Head of caudate nucleus (tissue), 42 donors: ENCODE measurements at regions of chr5 and their contacts with region 1.

Region 1: GRCh38 chr5:126348855-126349635 is 74.2 kb upstream of the GRAMD2B start:
- DNase-seq: no peak

Region 2: DNA sequence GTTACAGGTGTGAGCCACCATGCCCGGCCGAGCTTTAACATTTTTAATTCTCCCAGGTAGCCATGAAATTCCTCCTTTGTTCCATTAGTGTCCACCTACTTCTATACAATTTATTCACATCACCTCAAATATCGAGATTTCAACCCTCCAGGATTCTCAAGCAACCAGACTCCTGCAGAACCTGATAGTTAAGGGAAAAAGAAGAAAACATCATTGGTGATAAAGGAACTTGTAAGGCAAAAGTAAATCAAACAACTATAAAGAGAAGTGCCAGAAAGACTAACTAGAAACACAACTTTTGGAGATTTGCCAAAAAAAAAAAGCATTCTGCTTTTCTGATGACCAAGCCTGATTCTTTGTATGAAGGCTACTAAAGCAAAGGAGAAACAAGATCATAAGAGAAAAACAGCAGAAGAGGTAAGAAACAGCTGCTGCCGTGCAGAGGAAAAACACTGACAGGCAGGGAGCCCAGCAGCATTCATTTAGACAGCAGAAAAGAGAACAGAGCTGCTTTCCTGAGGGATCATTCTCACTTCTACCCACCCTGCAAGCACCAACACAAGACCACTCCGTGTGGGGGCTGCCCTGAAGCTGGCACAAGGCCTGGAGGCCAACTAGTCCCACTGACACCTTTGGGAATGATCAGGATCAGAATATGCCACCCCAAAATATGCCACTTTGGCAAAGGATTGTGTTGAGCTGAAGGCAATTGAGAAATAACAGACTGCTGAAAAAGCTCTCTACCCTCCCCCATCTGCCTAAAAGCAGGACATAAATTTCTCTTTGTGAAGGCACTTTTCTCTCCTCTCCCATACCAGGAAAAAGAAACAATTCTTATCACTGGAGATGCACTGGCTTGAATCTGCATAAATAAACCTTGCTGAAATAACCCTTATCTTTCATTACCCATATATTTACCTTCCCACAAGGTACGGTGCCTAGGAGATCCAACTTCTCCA is 170.9 kb after region 1 on chr5:
- intact Hi-C with region 1: no loop called
- DNase-seq: peak in 7 of 42 donors; percentile 8 to 49 (median 29)

Region 3: DNA sequence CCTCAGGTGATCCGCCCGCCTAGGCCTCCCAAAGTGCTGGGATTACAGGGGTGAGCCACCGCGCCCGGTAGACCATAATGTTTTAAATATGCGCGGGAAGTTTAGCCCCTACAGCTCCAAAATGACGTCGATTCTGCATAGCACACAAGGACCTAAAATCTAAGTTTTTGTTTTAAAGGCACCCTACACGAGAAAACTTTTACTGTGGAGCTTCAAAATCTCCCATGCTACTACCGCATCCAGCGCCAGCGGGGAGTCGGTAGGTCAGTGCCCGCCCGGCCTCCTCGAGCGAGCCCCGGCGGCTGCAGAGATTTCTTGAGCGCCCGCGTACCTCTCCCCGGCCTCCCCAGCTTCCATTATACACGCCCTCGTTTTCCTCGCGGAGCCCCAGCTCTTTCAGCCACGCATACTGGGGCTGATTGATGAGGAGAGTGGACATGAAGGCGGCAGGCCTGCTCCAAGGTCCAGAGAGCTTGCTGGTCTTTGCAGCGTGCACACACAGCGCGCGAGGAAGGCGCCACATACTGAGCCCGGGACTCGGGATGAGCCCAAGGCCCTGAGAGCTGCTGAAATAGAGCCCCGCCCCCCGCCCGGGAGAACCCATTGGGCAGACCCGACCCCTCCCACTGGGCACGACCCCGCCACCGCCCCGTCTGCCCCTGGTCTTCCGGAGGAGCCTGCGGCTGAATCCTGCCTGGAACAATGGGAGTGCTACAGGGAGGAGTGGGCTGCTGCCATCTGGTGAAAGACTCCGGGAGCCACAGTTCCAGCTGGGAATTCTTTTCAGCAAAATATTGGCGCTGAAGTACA is 245.8 kb after region 1 on chr5 and contains the start of gene ALDH7A1:
- intact Hi-C with region 1: loop called (anchors 5 kb)
- DNase-seq: peak; percentile 75 to 96 (median 90)

Region 4: DNA sequence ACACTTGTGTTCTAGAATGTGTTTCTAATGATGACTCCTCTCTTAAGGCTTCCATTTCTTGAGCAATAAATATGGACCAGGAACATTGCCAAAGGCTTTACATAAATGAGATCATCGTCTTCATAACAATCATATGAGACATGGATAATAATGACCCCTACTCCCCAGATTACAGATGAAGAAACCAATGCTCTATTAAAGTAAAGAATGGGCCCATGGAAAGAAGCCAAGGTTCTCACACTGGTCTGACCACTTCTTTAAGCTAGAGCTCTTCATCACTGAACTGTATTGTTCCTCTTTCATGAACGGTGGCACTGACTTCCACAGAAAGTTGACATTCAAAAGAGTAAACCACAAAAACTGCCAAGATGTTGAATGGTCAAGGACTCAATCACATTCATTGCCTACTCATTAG is 616.0 kb after region 1 on chr5:
- intact Hi-C with region 1: no loop called
- DNase-seq: no peak